Panc1 (cell line): ENCODE measurements at regions of chr18 and their contacts with region 1.

Region 1: GRCh38 chr18:32480581-32480980 is 9.9 kb upstream of the GAREM1 start:
- DNase-seq: no peak
- ATAC-seq: no peak
- H3K4me3 ChIP-seq: no peak overlapping the region
- H3K27ac ChIP-seq: no peak overlapping the region
- H3K4me1 ChIP-seq: no peaks in the 10 kb centered on the region
- H3K27me3 ChIP-seq: peaks cover 3% of the 10 kb centered on the region
- CTCF ChIP-seq: no peak

Region 2: GRCh38 chr18:32530947-32531651 is 50.5 kb after region 1 on chr18:
- CTCF ChIA-PET with region 1: no interaction called
- POLR2A ChIA-PET with region 1: no interaction called
- in situ Hi-C with region 1: no loop called
- intact Hi-C with region 1: loop called (anchors 5 kb)
- DNase-seq: no peak
- ATAC-seq: no peak
- H3K4me3 ChIP-seq: no peak overlapping the region
- H3K27ac ChIP-seq: no peak overlapping the region
- H3K4me1 ChIP-seq: no peaks in the 10 kb centered on the region
- H3K27me3 ChIP-seq: no peaks in the 10 kb centered on the region
- CTCF ChIP-seq: no peak

Region 3: GRCh38 chr18:32919799-32920198 is 439.2 kb after region 1 on chr18:
- CTCF ChIA-PET with region 1: no interaction called
- POLR2A ChIA-PET with region 1: no interaction called
- in situ Hi-C with region 1: no loop called
- intact Hi-C with region 1: no loop called
- DNase-seq: no peak
- ATAC-seq: 0 out of 2 replicates have a peak, but pooled peaks have one; percentile 58
- H3K4me3 ChIP-seq: no peak overlapping the region
- H3K27ac ChIP-seq: no peak overlapping the region
- H3K4me1 ChIP-seq: no peaks in the 10 kb centered on the region; the same call in 1 of the 2 replicates
- H3K27me3 ChIP-seq: no peaks in the 10 kb centered on the region
- CTCF ChIP-seq: peak; percentile 55